HEK293T (cell line): ENCODE measurements at regions of chr5 and their contacts with region 1.

Region 1: GRCh38 chr5:142713121-142713706 is 27.3 kb upstream of the FGF1 start:
- DNase-seq: peak; percentile 86

Region 2: DNA sequence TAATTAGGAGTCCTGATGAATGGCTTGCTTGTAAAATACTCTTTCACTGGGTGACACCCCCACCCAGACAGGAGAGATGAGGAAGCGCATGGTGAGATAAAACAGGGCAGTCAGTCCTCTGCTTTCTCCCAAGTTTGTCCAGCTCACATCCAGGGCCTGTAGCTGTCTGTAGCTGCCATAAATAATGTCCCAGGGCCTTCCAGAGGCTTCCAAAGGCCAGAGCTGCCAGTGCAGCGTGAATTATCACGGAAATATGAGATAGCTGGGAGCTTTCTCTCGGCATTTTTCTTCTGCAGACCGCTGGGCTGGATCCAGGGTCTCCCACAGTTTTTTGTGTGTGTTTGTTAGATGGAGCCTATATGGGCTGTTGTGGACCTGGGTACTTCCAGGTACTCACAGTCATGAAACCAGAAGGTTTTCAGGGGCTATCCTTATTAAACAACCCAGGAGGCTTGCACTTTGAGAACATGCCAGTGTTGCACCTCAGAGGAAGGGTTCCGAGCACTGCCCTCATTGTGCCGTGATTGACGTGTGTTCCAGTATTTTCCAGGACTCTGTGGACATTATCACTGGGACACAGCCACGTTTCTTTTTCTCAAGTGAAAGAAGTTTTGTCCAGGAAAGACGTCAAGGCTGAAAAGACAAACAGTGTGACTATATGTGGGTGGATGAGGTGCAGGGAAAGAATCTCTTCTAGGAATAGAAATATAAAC is 144.8 kb before region 1 on chr5:
- CTCF ChIA-PET with region 1: no interaction called
- POLR2A ChIA-PET with region 1: no interaction called
- DNase-seq: no peak

Region 3: GRCh38 chr5:142655339-142656267 is 57.6 kb before region 1 on chr5:
- CTCF ChIA-PET with region 1: interaction called, 17 read pairs
- POLR2A ChIA-PET with region 1: no interaction called
- DNase-seq: peak; percentile 89

Region 4: DNA sequence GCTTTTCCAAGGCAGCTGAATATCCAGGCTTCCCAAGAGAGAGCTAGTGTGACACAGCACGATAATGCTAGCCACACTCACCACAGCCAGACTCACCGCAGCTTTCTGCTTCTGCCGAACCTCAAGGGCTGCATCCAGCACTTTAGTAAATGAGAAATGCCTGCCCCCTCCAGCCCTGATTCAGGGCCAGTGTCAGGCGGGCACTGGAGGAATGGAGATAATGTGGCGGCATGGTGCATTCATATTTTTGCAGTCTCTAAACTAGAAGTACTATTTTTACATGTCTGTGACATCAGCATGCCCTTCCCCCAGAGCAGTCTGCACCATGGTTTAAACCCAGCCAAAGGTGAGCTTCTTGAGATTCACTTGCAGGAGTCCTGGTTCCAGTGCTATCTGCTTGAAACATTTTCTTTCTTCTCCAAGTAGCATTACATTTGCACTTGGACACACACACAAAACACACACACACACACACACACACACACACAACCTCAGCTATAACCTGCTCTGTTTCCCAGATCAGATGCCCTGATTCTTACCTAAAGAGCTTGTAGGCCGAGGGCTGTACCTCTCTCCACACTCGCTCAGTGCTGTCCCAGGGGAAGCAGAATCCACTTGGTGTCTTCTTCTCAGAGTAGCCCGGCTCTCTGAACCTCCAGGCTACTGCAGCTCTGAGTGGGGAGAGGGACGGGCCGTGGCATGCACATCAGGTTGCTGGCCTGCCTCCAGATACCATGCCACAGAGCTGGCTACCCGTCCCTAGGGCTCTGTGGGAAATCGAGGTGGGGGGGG is 27.6 kb before region 1 on chr5 and contains the start of gene FGF1:
- CTCF ChIA-PET with region 1: interaction called, 11 read pairs
- POLR2A ChIA-PET with region 1: no interaction called
- DNase-seq: no peak

Region 5: GRCh38 chr5:142748568-142749249 is 35.5 kb after region 1 on chr5:
- CTCF ChIA-PET with region 1: interaction called, 10 read pairs
- POLR2A ChIA-PET with region 1: no interaction called
- DNase-seq: peak; percentile 41

Region 6: DNA sequence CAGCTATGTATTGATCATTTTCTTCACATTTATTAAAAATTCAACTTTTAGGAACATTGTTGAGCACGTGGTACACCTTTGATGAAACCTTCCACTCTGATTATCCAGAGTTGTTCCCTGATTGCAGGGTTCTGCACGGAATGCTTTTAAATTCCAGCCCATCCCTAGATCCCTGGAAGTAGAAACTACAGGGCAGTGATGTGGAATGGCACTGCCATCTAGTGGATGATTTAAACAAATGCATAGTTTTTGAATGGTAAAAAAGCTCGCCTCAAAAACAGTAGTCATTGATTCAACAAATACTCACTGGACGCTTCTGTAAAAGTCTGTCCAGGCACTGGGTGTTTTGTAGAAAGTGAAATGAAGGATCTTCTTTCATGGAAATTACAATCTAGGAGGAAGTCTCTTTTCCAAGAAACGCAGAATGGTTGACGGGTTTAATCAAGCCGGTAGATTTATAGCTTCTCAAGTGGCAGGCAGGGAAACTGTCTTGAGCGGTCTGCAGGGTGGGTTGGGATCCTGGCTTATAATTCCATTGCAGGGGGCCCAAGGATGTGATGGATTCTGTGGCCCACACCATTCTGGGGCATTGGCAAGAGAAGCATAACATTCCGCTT is 175.4 kb after region 1 on chr5:
- CTCF ChIA-PET with region 1: interaction called, 68 read pairs
- POLR2A ChIA-PET with region 1: no interaction called
- DNase-seq: peak; percentile 67